Activated naive CD4-positive, alpha-beta T cell treated with anti-CD3 and anti-CD28 coated beads for 36 hours (primary cell): ENCODE measurements at regions of chr10 and their contacts with region 1.

Region 1: DNA sequence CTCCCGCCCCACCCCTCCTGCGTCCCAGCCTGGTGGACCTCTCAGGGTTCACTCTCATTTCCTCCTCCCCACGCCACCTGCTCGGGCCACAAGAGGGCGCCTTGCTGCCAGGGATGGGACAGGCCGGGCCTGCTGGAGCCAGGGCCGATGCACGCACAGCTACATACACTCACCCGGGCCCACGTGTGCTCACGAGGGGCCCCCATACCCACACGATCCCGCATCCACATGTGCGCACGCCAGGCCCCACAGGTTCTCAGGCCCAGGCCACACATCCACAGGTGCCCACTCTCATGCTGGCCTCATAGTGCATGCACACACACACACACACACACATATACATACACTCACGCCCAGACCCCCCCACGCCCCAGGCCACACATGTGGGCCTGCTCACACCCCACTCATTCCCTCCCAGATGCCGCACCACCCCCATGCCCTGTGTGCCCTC is 68.6 kb downstream of the LHPP start:
- DNase-seq: peak; percentile 91
- H3K4me3 Mint-ChIP-seq: no peak overlapping the region
- H3K27ac Mint-ChIP-seq: no peak overlapping the region
- H3K4me1 Mint-ChIP-seq: peaks cover 5% of the 10 kb centered on the region
- H3K27me3 Mint-ChIP-seq: no peaks in the 10 kb centered on the region

Region 2: DNA sequence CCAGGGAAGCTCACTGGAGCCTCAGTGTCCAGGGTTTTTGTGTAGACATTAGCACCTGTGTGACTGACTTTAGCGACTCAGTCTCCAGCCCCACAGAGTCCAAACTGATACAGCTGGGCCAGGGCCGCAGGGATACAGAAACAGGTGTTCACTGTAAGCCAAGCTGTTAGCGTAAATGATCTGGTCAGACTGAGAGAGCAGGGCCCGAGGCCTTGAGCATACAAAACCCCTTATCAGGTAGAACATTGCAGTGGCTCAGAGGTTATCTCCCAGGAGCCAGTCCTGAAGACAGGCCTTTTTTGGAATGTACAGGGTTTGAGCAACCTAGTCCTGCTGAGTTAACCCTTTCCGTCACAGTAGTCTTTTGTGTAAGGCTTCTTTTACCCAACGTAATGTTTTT is 43.6 kb before region 1 on chr10:
- CTCF ChIA-PET with region 1: no interaction called
- intact Hi-C with region 1: no loop called
- DNase-seq: no peak
- H3K4me3 Mint-ChIP-seq: no peak overlapping the region
- H3K27ac Mint-ChIP-seq: no peak overlapping the region
- H3K4me1 Mint-ChIP-seq: no peaks in the 10 kb centered on the region
- H3K27me3 Mint-ChIP-seq: no peaks in the 10 kb centered on the region

Region 3: DNA sequence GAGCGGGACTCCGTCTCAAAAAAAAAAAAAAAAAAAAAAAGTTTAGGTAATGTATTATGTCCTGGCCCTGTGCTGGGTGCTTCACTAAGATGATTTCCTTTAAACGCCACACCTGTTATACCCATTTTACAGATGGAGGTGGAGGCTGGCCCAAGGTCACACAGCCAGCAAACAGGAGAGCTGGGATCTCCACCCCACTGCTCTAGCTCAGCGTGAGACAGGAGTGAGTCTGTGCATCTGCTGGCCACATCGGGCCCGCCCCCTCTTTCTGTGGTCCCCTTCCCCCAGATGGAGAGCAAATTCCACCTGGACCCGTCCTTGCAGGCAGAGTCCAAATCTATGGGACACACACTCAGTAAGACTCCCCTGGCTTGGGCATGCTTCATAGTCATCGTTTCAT is 17.6 kb before region 1 on chr10:
- CTCF ChIA-PET with region 1: no interaction called
- intact Hi-C with region 1: no loop called
- DNase-seq: no peak
- H3K4me3 Mint-ChIP-seq: no peak overlapping the region
- H3K27ac Mint-ChIP-seq: peak overlapping the region; percentile 53
- H3K4me1 Mint-ChIP-seq: peaks cover 4% of the 10 kb centered on the region
- H3K27me3 Mint-ChIP-seq: no peaks in the 10 kb centered on the region

Region 4: DNA sequence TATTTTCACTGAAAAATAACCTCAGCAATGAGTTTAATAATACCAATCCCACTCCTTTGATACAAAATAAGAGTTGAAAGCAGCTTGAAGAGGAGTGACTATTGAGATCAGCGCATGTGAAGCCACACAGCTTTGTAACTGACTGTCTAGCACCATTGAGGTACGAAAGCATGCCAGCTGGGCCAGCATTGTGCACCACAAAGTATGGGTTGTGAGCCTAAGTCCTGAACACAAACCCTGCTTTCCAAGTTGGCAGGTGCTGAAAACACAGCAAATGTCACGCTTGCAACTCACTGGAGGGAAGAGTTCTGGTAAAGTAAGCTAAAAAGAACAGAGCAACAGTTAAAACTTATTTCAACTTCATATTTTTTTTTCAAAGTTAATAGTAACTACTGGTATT is 217.9 kb after region 1 on chr10:
- CTCF ChIA-PET with region 1: interaction called, 11 read pairs
- intact Hi-C with region 1: loop called (anchors 1 kb)
- DNase-seq: peak; percentile 33
- H3K4me3 Mint-ChIP-seq: no peak overlapping the region
- H3K27ac Mint-ChIP-seq: no peak overlapping the region
- H3K4me1 Mint-ChIP-seq: peaks cover 18% of the 10 kb centered on the region
- H3K27me3 Mint-ChIP-seq: no peaks in the 10 kb centered on the region

Region 5: DNA sequence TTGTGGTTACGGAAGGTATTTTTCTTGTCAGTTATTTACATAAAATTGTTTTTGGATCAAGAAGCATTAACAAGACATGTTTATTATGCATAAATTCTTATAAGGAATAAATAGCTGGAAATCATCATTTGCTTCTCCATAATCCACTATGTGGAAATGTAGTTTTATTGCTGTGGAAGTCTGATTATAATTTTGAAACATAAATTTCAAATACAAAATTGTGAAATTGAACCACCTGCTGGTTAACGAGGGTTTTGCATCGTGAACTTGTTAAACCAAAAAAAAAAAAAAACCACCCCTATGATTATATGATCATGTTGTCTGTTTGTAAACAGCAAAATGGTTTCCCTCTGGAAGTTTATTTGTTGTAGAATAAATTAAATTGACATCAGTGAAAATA is 297.2 kb after region 1 on chr10:
- CTCF ChIA-PET with region 1: interaction called, 11 read pairs
- intact Hi-C with region 1: loop called (anchors 1 kb)
- DNase-seq: peak; percentile 29
- H3K4me3 Mint-ChIP-seq: no peak overlapping the region
- H3K27ac Mint-ChIP-seq: no peak overlapping the region
- H3K4me1 Mint-ChIP-seq: no peaks in the 10 kb centered on the region
- H3K27me3 Mint-ChIP-seq: no peaks in the 10 kb centered on the region

Region 6: GRCh38 chr10:125060826-125061556 is 530.8 kb after region 1 on chr10:
- CTCF ChIA-PET with region 1: no interaction called
- intact Hi-C with region 1: loop called (anchors 1 kb)
- DNase-seq: peak; percentile 68
- H3K4me3 Mint-ChIP-seq: no peak overlapping the region
- H3K27ac Mint-ChIP-seq: no peak overlapping the region
- H3K4me1 Mint-ChIP-seq: peaks cover 15% of the 10 kb centered on the region
- H3K27me3 Mint-ChIP-seq: peaks cover 13% of the 10 kb centered on the region